Transverse colon (tissue), 4 donors: ENCODE measurements at regions of chr1 and their contacts with region 1.

Region 1: DNA sequence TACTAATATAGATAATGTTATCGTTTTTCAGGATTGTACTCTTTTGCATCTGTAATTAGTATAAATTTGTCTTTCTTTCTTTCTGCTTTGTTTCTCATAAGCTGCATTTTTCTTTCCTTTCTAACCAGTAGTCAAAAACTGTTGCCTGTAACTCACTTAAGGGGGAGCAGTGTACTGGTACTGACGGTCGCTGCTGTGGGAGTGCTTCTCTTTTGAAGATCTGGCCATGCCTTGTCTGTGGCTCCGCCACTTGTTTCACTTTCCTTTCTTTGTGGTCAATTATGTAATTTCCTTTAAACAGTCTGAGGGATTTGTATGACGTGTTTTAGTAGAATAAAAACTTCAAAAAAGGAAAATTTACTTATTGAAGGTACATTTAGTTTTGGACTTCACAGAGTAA is 37.0 kb downstream of the MIA3 start:
- DNase-seq: peak; percentile 50
- H3K4me3 ChIP-seq: no peak overlapping the region
- H3K27ac ChIP-seq: peak overlapping the region in 1 of 4 donors; percentile 30
- H3K4me1 ChIP-seq: peaks cover 0 to 18% (median 3%) of the 10 kb centered on the region in 4 donors
- H3K27me3 ChIP-seq: no peaks in the 10 kb centered on the region
- CTCF ChIP-seq: no peak
- EP300 ChIP-seq: no peak
- POLR2A ChIP-seq: no peak

Region 2: DNA sequence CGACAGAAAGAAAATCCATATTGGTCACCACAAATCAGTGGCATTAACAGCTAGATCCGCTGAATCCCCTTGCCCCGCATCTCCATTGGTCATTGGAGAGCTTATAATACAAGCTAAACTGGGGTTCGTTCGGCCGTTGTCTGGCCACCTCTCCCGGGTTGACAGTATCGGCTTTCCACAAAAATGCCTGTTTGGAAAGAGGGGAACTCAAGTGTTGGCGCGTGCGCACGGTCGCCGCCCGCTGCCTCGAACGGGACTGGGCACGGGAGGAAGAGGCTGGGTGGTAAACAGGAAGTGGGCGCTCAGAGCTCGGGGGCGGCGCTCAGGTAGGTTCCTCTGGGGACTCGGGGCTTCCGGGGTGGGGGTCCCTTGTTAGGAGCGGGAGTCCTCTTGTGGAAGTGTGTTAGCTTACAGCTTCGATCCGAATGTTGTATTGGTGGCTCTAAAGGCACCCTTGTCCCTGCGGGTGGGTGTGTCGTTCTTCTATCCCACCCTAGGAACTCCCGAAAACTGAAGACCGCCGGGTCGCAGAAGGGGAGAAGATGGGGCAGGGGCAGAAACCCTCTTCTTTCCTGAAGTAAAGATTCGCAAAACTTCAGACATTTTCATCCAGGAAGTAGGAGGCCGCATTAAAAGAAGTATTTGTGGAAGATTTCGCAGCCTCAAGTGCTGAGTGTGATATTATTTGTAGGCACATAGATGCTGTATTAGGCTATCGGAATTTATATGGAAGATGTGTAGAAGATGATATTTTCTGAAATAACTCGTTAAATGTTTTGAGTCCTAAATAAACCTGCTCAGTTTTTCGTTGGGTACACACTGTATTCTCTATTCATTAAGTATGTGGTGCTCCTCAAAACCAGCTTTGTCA is 58.5 kb after region 1 on chr1:
- in situ Hi-C with region 1: loop called in 1 of 4 experiments (anchors 10 kb)
- intact Hi-C with region 1: no loop called
- DNase-seq: peak; percentile 95
- H3K4me3 ChIP-seq: peak overlapping the region; percentile 65 to 90 (median 74)
- H3K27ac ChIP-seq: peak overlapping the region; percentile 94 to 99 (median 96)
- H3K4me1 ChIP-seq: peaks cover 15 to 35% (median 18%) of the 10 kb centered on the region in 4 donors
- H3K27me3 ChIP-seq: no peaks in the 10 kb centered on the region
- CTCF ChIP-seq: no peak
- EP300 ChIP-seq: no peak
- POLR2A ChIP-seq: peak; percentile 68

Region 3: GRCh38 chr1:222814536-222815439 is 159.9 kb after region 1 on chr1 and contains the start of gene DISP1:
- in situ Hi-C with region 1: no loop called
- intact Hi-C with region 1: no loop called
- DNase-seq: peak; percentile 86
- H3K4me3 ChIP-seq: peak within 1 kb of the TSS; percentile 58 to 99 (median 80)
- H3K27ac ChIP-seq: peak within 1 kb of the TSS; percentile 93 to 98 (median 96)
- H3K4me1 ChIP-seq: peaks cover 3 to 26% (median 11%) of the 10 kb centered on the region in 4 donors
- H3K27me3 ChIP-seq: no peaks in the 10 kb centered on the region
- CTCF ChIP-seq: no peak
- EP300 ChIP-seq: no peak
- POLR2A ChIP-seq: peak; percentile 66
- total RNA-seq, gene DISP1: 2.2 to 7.2 (median 5.6) TPM